PC-3 (cell line): ENCODE measurements at regions of chr5 and their contacts with region 1.

Region 1: GRCh38 chr5:82165740-82166530 is 112.2 kb downstream of the RPS23 start:
- DNase-seq: peak; percentile 73
- ATAC-seq: peak; percentile 78
- H3K4me3 ChIP-seq: no peak overlapping the region
- H3K27ac ChIP-seq: peak overlapping the region; percentile 68; the same call in 1 of the 2 replicates
- H3K4me1 ChIP-seq: peaks cover 28% of the 10 kb centered on the region
- H3K27me3 ChIP-seq: no peaks in the 10 kb centered on the region
- CTCF ChIP-seq: peak; percentile 88

Region 2: GRCh38 chr5:81301271-81302015 is 864.5 kb before region 1 on chr5 and contains the start of gene ZCCHC9:
- CTCF ChIA-PET with region 1: no interaction called
- POLR2A ChIA-PET with region 1: interaction called, 4 read pairs
- intact Hi-C with region 1: loop called (anchors 5 kb)
- DNase-seq: peak; percentile 90
- ATAC-seq: peak; percentile 71
- H3K4me3 ChIP-seq: peak within 1 kb of the TSS; percentile 87
- H3K27ac ChIP-seq: peak within 1 kb of the TSS; percentile 95
- H3K4me1 ChIP-seq: peaks cover 39% of the 10 kb centered on the region
- H3K27me3 ChIP-seq: no peaks in the 10 kb centered on the region
- CTCF ChIP-seq: peak; percentile 11; the same call in 1 of the 2 replicates
- total RNA-seq, gene ZCCHC9: 19.4 and 22.7 TPM in 2 replicates

Region 3: GRCh38 chr5:81851481-81852178 is 314.3 kb before region 1 on chr5:
- CTCF ChIA-PET with region 1: interaction called, 7 read pairs
- POLR2A ChIA-PET with region 1: no interaction called
- intact Hi-C with region 1: loop called (anchors 1 kb)
- DNase-seq: peak; percentile 86
- ATAC-seq: peak; percentile 92
- H3K4me3 ChIP-seq: peak overlapping the region; percentile 67
- H3K27ac ChIP-seq: peak overlapping the region; percentile 71
- H3K4me1 ChIP-seq: peaks cover 10% of the 10 kb centered on the region
- H3K27me3 ChIP-seq: no peaks in the 10 kb centered on the region
- CTCF ChIP-seq: no peak

Region 4: GRCh38 chr5:81971712-81972495 is 194.0 kb before region 1 on chr5 and contains the start of gene ATG10:
- CTCF ChIA-PET with region 1: no interaction called
- POLR2A ChIA-PET with region 1: no interaction called
- intact Hi-C with region 1: loop called (anchors 5 kb)
- DNase-seq: peak; percentile 88
- ATAC-seq: peak; percentile 96
- H3K4me3 ChIP-seq: peak within 1 kb of the TSS; percentile 78
- H3K27ac ChIP-seq: peak within 1 kb of the TSS; percentile 89
- H3K4me1 ChIP-seq: peaks cover 12% of the 10 kb centered on the region; the same call in 1 of the 2 replicates
- H3K27me3 ChIP-seq: no peaks in the 10 kb centered on the region
- CTCF ChIP-seq: no peak
- total RNA-seq, gene ATG10: 11.7 and 11.8 TPM in 2 replicates

Region 5: GRCh38 chr5:82107267-82107666 is 58.7 kb before region 1 on chr5:
- CTCF ChIA-PET with region 1: interaction called, 21 read pairs
- POLR2A ChIA-PET with region 1: interaction called, 3 read pairs
- intact Hi-C with region 1: loop called (anchors 1 kb)
- DNase-seq: peak; percentile 30
- ATAC-seq: peak; percentile 56; the same call in 1 of the 2 replicates
- H3K4me3 ChIP-seq: no peak overlapping the region
- H3K27ac ChIP-seq: no peak overlapping the region
- H3K4me1 ChIP-seq: no peaks in the 10 kb centered on the region
- H3K27me3 ChIP-seq: no peaks in the 10 kb centered on the region
- CTCF ChIP-seq: peak; percentile 76

Region 6: DNA sequence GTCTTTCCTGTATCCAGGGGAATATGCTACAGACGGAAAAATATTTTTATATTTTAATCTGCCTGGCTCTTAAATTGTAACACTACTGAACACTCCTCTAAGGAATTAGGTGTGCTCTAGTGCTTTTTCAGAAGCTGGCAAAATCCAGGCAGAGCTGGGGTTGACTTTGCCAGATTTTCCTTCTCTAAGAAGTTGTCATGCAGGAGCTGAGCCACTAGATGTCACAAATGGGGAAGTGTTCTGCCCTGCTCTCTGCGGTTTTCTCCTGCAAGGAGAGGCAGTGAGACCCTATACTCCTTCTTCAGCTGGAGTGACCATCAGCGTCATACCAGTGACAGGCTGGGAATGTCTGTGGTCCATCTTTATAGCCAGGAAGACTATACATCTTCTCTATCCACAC is 1442.2 kb after region 1 on chr5:
- CTCF ChIA-PET with region 1: interaction called, 7 read pairs
- POLR2A ChIA-PET with region 1: no interaction called
- intact Hi-C with region 1: loop called (anchors 2 kb)
- DNase-seq: peak; percentile 67
- ATAC-seq: peak; percentile 92
- H3K4me3 ChIP-seq: no peak overlapping the region
- H3K27ac ChIP-seq: no peak overlapping the region
- H3K4me1 ChIP-seq: no peaks in the 10 kb centered on the region
- H3K27me3 ChIP-seq: no peaks in the 10 kb centered on the region
- CTCF ChIP-seq: peak; percentile 68